ENCODE measurements at regions of chr1 and their contacts with region 1.

Region 1: DNA sequence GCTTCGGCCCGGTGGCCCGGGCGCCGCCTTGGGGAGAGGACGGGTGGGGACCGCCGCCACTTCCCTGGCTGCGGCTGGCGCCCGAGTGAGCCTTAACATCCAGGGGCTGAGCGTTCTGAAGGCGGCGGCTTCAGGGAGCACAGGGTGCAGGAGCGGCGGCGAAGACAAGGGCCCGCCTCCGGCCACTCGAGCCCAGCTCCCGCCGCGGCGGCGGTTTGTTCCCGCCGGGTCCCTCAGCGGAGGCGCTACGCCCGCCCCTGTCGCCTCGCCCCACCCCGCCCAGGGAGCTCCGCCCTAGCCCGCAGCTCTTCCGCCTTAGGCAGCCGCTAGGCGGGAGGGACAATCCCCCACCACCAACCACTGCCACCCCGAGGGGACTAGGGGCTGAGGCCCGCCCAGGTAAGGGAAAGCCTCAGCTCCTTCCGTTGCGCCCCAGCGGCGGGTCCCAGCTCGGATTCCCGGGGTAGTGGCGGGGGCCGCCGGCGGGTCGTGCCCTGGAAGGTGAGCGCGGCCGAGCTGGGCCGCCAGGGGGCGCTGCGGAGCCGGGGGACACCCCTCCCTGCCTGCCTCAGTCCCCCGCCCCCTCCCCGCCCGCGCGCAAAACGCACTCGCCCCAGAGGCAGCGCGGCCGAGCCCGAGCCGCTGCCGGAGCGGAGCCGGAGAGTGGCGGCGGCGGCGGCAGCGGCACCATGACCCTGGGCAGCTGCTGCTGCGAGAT is at the start of gene FOXD2:
- DNase-seq: peak; percentile 93 to 96
- H3K4me3 ChIP-seq: peak within 1 kb of the TSS; percentile 78
- H3K4me3 Mint-ChIP-seq: peak within 1 kb of the TSS; percentile 84
- H3K27ac Mint-ChIP-seq: peak within 1 kb of the TSS; percentile 49
- H3K4me1 ChIP-seq: no peaks in the 10 kb centered on the region
- H3K4me1 Mint-ChIP-seq: no peaks in the 10 kb centered on the region
- H3K27me3 ChIP-seq: no peaks in the 10 kb centered on the region
- H3K27me3 Mint-ChIP-seq: no peaks in the 10 kb centered on the region
- CTCF ChIP-seq: peak; percentile 50 to 95
- total RNA-seq, gene FOXD2: 4.4 and 4.6 TPM in 2 replicates

Region 2: DNA sequence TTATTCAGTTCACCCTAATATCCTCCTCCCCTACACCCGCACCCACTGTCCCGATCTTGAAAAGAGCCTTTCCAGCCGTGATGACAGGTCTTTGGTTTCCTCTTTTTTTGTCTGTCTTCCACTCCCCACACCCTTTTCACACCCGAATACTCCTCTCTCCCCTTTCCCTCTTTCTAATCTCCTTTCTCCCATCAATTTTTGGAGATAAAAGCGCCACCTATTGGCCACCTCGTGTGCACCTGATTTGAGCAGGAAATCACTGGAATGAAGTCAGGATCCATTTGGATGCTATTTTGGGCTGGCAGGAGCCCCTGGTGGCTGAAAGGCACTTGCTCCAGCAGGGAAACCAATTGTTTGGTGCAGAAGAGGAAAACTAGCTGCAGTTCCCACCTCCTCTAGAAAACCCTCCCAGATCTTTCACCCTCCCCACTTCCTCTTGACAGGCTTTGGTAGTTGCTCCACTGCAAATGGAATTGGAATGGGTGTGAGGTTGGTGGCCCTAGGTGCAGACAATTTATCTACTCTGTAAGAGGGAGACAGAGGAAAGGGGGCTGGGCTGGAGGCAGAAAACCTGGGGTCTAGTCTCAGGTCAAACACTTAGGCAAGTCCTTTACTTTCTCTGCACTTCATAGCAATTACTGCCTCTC is 13.1 kb before region 1 on chr1:
- CTCF ChIA-PET with region 1: interaction called, 5 read pairs
- POLR2A ChIA-PET with region 1: interaction called, 12 read pairs
- intact Hi-C with region 1: no loop called
- DNase-seq: peak; percentile 61 to 75
- H3K4me3 ChIP-seq: no peak overlapping the region
- H3K4me3 Mint-ChIP-seq: no peak overlapping the region
- H3K27ac Mint-ChIP-seq: no peak overlapping the region
- H3K4me1 ChIP-seq: no peaks in the 10 kb centered on the region
- H3K4me1 Mint-ChIP-seq: peaks cover 7% of the 10 kb centered on the region
- H3K27me3 ChIP-seq: no peaks in the 10 kb centered on the region
- H3K27me3 Mint-ChIP-seq: no peaks in the 10 kb centered on the region
- CTCF ChIP-seq: peak; percentile 80 to 83

Region 3: GRCh38 chr1:47507881-47508701 is 70.5 kb after region 1 on chr1:
- CTCF ChIA-PET with region 1: interaction called, 47 read pairs
- POLR2A ChIA-PET with region 1: interaction called, 5 read pairs
- intact Hi-C with region 1: loop called (anchors 1 kb)
- DNase-seq: peak; percentile 71 to 73
- H3K4me3 ChIP-seq: peak overlapping the region; percentile 39
- H3K4me3 Mint-ChIP-seq: peak overlapping the region; percentile 71
- H3K27ac Mint-ChIP-seq: peak overlapping the region; percentile 39
- H3K4me1 ChIP-seq: peaks cover 15% of the 10 kb centered on the region; the same call in 1 of the 2 replicates
- H3K4me1 Mint-ChIP-seq: peaks cover 12% of the 10 kb centered on the region
- H3K27me3 ChIP-seq: no peaks in the 10 kb centered on the region
- H3K27me3 Mint-ChIP-seq: no peaks in the 10 kb centered on the region
- CTCF ChIP-seq: no peak

Region 4: DNA sequence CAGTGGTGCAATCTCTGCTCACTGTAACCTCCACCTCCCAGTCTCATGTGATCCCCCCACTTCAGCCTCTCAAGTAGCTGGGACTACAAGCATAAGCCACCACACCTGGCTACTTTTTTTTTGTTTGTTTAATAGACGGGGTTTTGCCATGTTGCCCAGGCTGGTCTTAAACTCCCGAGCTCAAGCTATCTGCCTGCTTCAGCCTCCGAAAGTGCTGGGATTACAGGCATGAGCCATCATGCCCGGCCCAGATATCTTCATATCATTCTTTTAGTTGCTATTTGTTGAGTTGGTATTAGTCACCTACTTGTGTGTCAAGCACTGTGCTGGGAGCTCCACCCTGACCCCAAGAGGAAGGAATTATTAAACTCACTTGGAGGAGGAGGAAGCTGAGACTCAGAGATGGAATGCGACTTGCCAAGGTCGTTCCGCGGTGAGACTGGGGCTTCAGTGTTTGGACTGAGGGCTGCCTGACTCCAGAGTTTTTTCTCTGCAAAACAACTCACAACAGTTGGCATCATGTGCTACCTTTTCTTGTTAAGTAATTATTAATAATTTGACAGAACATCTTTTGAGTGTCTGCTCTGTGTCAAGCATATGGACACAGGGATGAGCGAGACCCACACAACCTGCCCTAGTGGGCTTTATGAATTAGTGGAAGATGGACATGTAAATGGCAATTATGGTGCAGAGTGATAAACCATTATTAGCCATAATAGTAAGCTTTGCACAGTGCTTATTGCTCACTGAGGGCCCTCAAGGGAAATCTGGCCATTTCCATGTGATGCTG is 132.3 kb after region 1 on chr1:
- CTCF ChIA-PET with region 1: interaction called, 23 read pairs
- POLR2A ChIA-PET with region 1: interaction called, 3 read pairs
- intact Hi-C with region 1: loop called (anchors 1 kb)
- DNase-seq: peak; percentile 69 to 72
- H3K4me3 ChIP-seq: no peak overlapping the region
- H3K4me3 Mint-ChIP-seq: no peak overlapping the region
- H3K27ac Mint-ChIP-seq: no peak overlapping the region
- H3K4me1 ChIP-seq: peaks cover 12% of the 10 kb centered on the region
- H3K4me1 Mint-ChIP-seq: peaks cover 12% of the 10 kb centered on the region
- H3K27me3 ChIP-seq: no peaks in the 10 kb centered on the region
- H3K27me3 Mint-ChIP-seq: no peaks in the 10 kb centered on the region
- CTCF ChIP-seq: peak in 1 of 2 experiments; percentile 54

Region 5: DNA sequence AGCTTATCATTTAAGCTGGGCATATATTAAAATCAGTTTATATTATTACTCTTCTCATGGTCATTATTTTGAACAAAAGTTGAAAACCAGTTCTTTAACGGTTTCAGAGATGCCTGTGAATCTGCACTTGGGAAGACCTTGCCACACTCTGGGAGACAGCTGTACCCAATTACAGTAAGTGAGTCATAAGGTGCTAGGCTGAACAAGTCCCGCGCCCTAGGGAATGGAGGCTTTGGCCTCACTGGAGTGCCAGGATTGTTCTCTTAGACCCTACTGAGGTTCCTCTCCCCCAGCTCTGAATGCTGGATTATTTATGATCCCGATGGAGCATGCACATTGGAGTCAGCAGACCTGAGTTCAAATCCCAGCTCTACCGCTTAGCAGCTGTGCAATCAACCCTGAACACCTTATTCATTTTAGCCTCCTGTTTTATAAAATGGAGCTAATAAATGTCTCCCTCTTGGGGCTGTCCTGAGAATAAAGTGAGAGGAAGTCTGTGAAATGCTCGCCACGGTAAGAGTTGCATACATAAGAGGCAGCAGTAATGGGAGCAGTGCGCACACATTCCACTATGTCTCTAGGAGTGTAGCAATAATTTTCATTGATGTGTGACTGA is 266.5 kb after region 1 on chr1:
- CTCF ChIA-PET with region 1: interaction called, 48 read pairs
- POLR2A ChIA-PET with region 1: interaction called, 3 read pairs
- intact Hi-C with region 1: no loop called
- DNase-seq: no peak
- H3K4me3 ChIP-seq: no peak overlapping the region
- H3K4me3 Mint-ChIP-seq: no peak overlapping the region
- H3K27ac Mint-ChIP-seq: no peak overlapping the region
- H3K4me1 ChIP-seq: no peaks in the 10 kb centered on the region
- H3K4me1 Mint-ChIP-seq: no peaks in the 10 kb centered on the region
- H3K27me3 ChIP-seq: no peaks in the 10 kb centered on the region
- H3K27me3 Mint-ChIP-seq: no peaks in the 10 kb centered on the region
- CTCF ChIP-seq: peak in 1 of 2 experiments; percentile 12

Region 6: GRCh38 chr1:47725992-47726855 is 288.6 kb after region 1 on chr1:
- CTCF ChIA-PET with region 1: interaction called, 57 read pairs
- POLR2A ChIA-PET with region 1: no interaction called
- intact Hi-C with region 1: no loop called
- DNase-seq: peak; percentile 75 to 77
- H3K4me3 ChIP-seq: no peak overlapping the region
- H3K4me3 Mint-ChIP-seq: no peak overlapping the region
- H3K27ac Mint-ChIP-seq: no peak overlapping the region
- H3K4me1 ChIP-seq: peaks cover 24% of the 10 kb centered on the region
- H3K4me1 Mint-ChIP-seq: peaks cover 22% of the 10 kb centered on the region
- H3K27me3 ChIP-seq: no peaks in the 10 kb centered on the region
- H3K27me3 Mint-ChIP-seq: no peaks in the 10 kb centered on the region
- CTCF ChIP-seq: peak; percentile 71 to 79

Measured in Caco-2 (cell line).